ENCODE measurements at regions of chr3 and their contacts with region 1.

Region 1: GRCh38 chr3:63993653-63994079 is 29.6 kb downstream of the PSMD6 start:
- DNase-seq: peak; percentile 17 to 77
- H3K4me3 ChIP-seq: no peak overlapping the region
- H3K27ac ChIP-seq: no peak overlapping the region
- H3K4me1 ChIP-seq: no peaks in the 10 kb centered on the region
- H3K27me3 ChIP-seq: no peaks in the 10 kb centered on the region
- CTCF ChIP-seq: peak; percentile 80 to 94 (median 94)

Region 2: DNA sequence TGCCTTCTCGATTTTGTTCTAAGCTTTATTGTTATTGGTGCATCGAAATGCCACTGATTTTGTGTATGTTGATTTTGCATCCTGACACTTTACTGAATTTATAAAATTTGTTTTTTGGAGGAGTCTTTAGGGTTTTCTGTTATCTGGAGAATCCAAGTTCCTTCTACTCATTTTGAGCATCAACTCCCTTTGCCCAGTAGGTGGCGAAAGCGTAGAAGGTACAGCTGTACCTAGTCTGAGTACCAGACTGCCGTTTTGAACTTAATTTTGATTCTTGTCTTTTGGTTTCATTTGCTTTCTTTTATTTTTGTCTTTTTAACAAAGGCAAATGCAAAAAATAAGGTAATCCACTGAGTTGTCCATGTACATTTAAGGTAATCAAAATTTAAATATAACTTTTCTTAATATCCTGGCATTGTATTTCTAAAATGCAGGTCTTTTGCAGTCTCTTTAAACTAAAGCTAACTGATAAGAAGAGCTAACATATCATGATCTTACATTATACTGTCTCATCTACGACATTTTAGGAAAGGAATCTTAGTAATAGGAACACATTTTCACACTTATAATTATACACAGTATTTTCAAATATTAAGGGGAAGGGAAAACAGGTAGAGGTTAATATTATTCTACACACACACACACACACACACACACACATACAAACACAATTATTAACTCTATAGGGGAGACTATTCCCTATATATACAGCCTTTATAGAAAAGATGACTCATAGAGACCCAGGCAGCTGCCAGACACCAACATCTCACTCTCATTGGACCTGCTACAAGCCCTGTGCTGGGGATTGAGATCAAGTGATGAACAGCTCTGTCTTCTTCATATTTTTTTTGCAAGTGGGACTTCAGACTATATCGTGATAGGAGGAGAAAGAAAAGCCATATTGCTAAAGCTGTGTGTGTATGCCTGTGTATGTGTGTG is 643.8 kb before region 1 on chr3:
- intact Hi-C with region 1: loop called (anchors 5 kb)
- DNase-seq: no peak
- H3K4me3 ChIP-seq: no peak overlapping the region
- H3K27ac ChIP-seq: no peak overlapping the region
- H3K4me1 ChIP-seq: no peaks in the 10 kb centered on the region
- H3K27me3 ChIP-seq: no peaks in the 10 kb centered on the region
- CTCF ChIP-seq: peak; percentile 31 to 53 (median 38)

Region 3: GRCh38 chr3:63863148-63864007 is 130.3 kb before region 1 on chr3 and contains the starts of genes ATXN7 and THOC7:
- intact Hi-C with region 1: loop called (anchors 5 kb)
- DNase-seq: peak in 1 of 2 donors; percentile 88
- H3K4me3 ChIP-seq: peak within 1 kb of the TSS; percentile 88 to 94
- H3K27ac ChIP-seq: peak within 1 kb of the TSS; percentile 87 to 89
- H3K4me1 ChIP-seq: peaks cover 0 to 3% of the 10 kb centered on the region in 2 donors
- H3K27me3 ChIP-seq: no peaks in the 10 kb centered on the region
- CTCF ChIP-seq: no peak
- total RNA-seq, gene ATXN7: 13.2 TPM
- total RNA-seq, gene THOC7: 13.8 TPM

Region 4: DNA sequence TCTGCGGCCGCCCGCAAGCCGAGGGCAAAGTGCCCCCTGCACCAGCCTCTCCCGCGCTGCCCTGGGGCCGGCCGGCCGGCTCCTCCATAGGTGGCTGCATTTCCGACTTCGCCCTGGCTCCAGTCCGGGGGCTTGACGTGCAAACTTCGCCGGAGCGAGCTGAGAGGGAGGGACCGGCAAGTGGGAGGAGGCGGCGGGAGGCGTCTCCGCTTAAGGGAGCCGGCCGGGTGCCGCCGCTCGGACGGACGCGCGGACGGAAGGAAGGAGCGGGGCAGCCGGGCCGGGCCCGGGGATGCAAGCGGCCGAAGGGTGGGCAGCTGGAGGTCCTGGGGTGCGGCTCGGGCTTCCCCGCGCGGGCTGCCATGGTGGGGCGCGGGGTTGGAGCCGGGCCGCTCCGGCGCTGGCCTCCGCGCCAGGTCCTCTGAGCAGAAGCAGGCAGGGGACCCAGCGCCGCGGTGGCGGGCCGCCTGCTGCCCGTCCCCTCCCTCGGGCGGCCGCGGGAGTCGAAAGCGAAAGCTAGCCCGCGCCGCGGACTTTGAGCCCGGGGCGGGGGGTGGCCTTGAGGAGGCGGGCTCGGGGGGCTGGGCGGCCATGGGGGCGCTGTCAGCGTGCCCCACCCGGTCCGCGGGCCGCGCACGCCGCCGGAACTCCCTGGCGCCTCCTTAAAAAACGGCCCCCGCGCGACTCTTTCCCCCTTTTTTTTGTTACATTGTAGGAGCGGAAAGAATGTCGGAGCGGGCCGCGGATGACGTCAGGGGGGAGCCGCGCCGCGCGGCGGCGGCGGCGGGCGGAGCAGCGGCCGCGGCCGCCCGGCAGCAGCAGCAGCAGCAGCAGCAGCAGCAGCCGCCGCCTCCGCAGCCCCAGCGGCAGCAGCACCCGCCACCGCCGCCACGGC is 81.5 kb before region 1 on chr3 and contains the start of gene SCAANT1:
- intact Hi-C with region 1: loop called (anchors 5 kb)
- DNase-seq: peak; percentile 53 to 96
- H3K4me3 ChIP-seq: peak within 1 kb of the TSS; percentile 97 to 98
- H3K27ac ChIP-seq: peak within 1 kb of the TSS; percentile 99 to 100
- H3K4me1 ChIP-seq: peaks cover 3 to 17% of the 10 kb centered on the region in 2 donors
- H3K27me3 ChIP-seq: no peaks in the 10 kb centered on the region
- CTCF ChIP-seq: peak in 1 of 3 experiments; percentile 35
- total RNA-seq, gene SCAANT1: not detected

Region 5: DNA sequence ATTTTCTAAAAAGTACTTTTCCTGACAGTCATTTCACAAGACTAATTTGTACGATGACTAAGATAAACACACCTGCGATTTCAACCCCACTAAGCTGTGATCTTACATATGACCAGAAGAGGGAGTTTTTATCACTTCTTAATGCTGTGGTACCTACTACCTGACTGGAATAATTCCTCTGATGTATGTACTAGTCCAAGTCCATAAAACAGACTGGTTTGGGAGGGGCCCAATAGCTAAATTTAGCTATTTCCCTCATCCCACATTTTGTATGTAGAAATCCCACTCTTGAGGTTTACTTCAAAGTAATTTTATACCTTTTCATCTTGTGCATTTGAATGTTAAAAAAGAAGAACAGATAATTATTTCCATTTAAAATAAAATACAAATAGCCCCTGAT is 31.8 kb before region 1 on chr3:
- intact Hi-C with region 1: loop called (anchors 2 kb)
- DNase-seq: no peak
- H3K4me3 ChIP-seq: no peak overlapping the region
- H3K27ac ChIP-seq: no peak overlapping the region
- H3K4me1 ChIP-seq: peaks cover 3 to 27% of the 10 kb centered on the region in 2 donors
- H3K27me3 ChIP-seq: no peaks in the 10 kb centered on the region
- CTCF ChIP-seq: peak; percentile 37 to 58 (median 42)

Measured in ascending aorta (tissue), 2 donors.